Endothelial cell of umbilical vein (primary cell): ENCODE measurements at regions of chr5 and their contacts with region 1.

Region 1: DNA sequence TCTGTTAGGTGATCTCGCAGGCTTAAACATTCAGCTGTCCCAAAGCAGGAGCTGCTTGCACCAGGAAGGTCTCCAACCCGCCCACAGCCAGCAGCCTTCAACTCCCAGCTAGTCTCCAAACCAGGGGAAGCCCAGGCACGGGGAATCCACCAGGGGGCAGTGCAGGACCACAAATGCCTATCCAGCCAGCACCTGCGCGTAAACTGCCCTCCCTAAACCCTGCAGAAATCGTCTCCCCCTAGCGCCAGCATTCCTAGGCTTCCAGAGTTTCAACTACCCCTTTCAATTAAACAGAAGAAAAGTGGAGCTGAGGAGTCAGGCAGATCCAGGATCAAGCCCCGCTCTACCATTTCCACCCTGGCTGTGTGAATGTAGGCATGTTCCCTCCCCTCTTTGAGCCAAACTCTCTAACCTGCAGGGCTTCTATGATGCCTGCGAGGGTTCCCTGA is 72.0 kb downstream of the HRH2 start:
- DNase-seq: peak; percentile 81
- H3K4me3 ChIP-seq: no peak overlapping the region
- H3K27ac ChIP-seq: no peak overlapping the region
- H3K4me1 ChIP-seq: no peaks in the 10 kb centered on the region
- H3K27me3 ChIP-seq: no peaks in the 10 kb centered on the region
- CTCF ChIP-seq: peak; percentile 90 to 94
- POLR2A ChIP-seq: no peak

Region 2: GRCh38 chr5:175534070-175534932 is 195.6 kb before region 1 on chr5:
- CTCF ChIA-PET with region 1: interaction called, 12 read pairs
- POLR2A ChIA-PET with region 1: no interaction called
- dilution Hi-C with region 1: no loop called
- intact Hi-C with region 1: loop called (anchors 1 kb)
- DNase-seq: peak; percentile 69
- H3K4me3 ChIP-seq: no peak overlapping the region
- H3K27ac ChIP-seq: no peak overlapping the region
- H3K4me1 ChIP-seq: no peaks in the 10 kb centered on the region
- H3K27me3 ChIP-seq: no peaks in the 10 kb centered on the region
- CTCF ChIP-seq: peak; percentile 98
- POLR2A ChIP-seq: no peak

Region 3: GRCh38 chr5:175718401-175719108 is 11.3 kb before region 1 on chr5:
- CTCF ChIA-PET with region 1: interaction called, 21 read pairs
- POLR2A ChIA-PET with region 1: no interaction called
- dilution Hi-C with region 1: no loop called
- intact Hi-C with region 1: no loop called
- DNase-seq: no peak
- H3K4me3 ChIP-seq: no peak overlapping the region
- H3K27ac ChIP-seq: no peak overlapping the region
- H3K4me1 ChIP-seq: no peaks in the 10 kb centered on the region
- H3K27me3 ChIP-seq: no peaks in the 10 kb centered on the region
- CTCF ChIP-seq: peak in 1 of 2 donors; percentile 11
- POLR2A ChIP-seq: no peak

Region 4: GRCh38 chr5:175873088-175873454 is 143.2 kb after region 1 on chr5:
- CTCF ChIA-PET with region 1: interaction called, 5 read pairs
- POLR2A ChIA-PET with region 1: no interaction called
- dilution Hi-C with region 1: no loop called
- intact Hi-C with region 1: loop called (anchors 10 kb)
- DNase-seq: no peak
- H3K4me3 ChIP-seq: no peak overlapping the region
- H3K27ac ChIP-seq: no peak overlapping the region
- H3K4me1 ChIP-seq: no peaks in the 10 kb centered on the region
- H3K27me3 ChIP-seq: peaks cover 0 to 5% of the 10 kb centered on the region in 2 experiments
- CTCF ChIP-seq: peak in 1 of 2 donors; percentile 10
- POLR2A ChIP-seq: no peak

Region 5: DNA sequence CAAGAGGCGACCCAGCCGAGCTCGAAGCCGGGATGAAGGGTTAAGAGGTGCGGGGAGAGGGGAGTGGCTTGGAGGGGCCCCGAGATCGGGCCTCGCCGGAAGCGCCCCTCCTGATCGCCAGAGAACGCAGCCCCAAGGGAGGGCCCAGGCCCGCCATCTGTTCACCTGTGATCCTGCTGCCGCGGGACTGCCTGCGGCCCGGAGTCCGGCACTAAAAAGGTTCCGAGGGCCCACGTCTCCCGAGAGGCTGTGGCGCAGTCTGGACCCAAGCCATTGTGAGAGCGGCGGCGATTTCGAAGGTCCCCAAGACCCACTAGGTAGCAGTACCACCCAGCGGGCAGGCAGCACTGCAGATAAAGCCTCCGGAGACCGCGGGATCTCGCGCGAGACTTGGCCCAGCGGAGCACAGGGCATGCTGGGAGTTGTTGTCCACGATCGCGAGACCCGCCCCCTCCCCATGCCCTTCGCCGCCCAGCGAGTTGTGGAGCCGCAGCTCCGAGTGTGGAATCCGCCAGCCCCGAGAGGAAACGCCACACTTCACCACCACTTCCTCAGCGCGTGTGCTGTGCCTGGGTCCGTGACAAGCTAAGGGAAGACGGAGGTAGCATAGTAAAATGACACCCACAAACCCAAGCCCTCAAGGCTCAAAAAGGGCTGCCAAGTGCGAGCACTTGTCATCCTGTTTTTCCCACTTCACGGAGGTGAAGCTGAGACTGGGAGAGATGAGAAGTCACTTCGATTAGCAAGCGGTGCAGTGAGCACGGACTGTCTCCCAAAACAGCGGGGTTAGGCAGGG is 631.8 kb after region 1 on chr5 and contains the start of gene KIAA1191:
- CTCF ChIA-PET with region 1: interaction called, 12 read pairs
- POLR2A ChIA-PET with region 1: no interaction called
- dilution Hi-C with region 1: no loop called
- intact Hi-C with region 1: no loop called
- DNase-seq: peak; percentile 94
- H3K4me3 ChIP-seq: peak within 1 kb of the TSS; percentile 83 to 99 (median 92)
- H3K27ac ChIP-seq: peak within 1 kb of the TSS; percentile 67
- H3K4me1 ChIP-seq: peaks cover 13% of the 10 kb centered on the region
- H3K27me3 ChIP-seq: no peaks in the 10 kb centered on the region
- CTCF ChIP-seq: no peak
- POLR2A ChIP-seq: peak; percentile 98
- total RNA-seq, gene KIAA1191: 116 and 119 TPM in 2 replicates

Region 6: GRCh38 chr5:176596689-176597416 is 867.0 kb after region 1 on chr5:
- CTCF ChIA-PET with region 1: interaction called, 10 read pairs
- POLR2A ChIA-PET with region 1: no interaction called
- dilution Hi-C with region 1: no loop called
- intact Hi-C with region 1: no loop called
- DNase-seq: peak; percentile 60
- H3K4me3 ChIP-seq: peak overlapping the region in 1 of 3 experiments; percentile 34
- H3K27ac ChIP-seq: no peak overlapping the region
- H3K4me1 ChIP-seq: no peaks in the 10 kb centered on the region
- H3K27me3 ChIP-seq: no peaks in the 10 kb centered on the region
- CTCF ChIP-seq: peak in 1 of 2 donors; percentile 26
- POLR2A ChIP-seq: no peak